Activated T-helper 1 cell treated with anti-CD3 and anti-CD28 coated beads, Interleukin-12 subunit alpha, Interleukin-12 subunit beta, Interleukin-2, Interleukin-4 antibody, amounts not matched to agents 30 ng/mL and 10 ng/mL and 1 ng/mL, durations not matched to agents 14 hours and 24 hours and 36 hours (primary cell): ENCODE measurements at regions of chr1 and their contacts with region 1.

Region 1: GRCh38 chr1:10170239-10170574 is 40.2 kb upstream of the KIF1B start:
- DNase-seq: peak; percentile 22
- H3K4me3 Mint-ChIP-seq: peak overlapping the region; percentile 71
- H3K27ac Mint-ChIP-seq: peak overlapping the region; percentile 86
- H3K4me1 Mint-ChIP-seq: peaks cover 50% of the 10 kb centered on the region
- H3K27me3 Mint-ChIP-seq: no peaks in the 10 kb centered on the region

Region 2: GRCh38 chr1:10074059-10074851 is 96.0 kb before region 1 on chr1:
- intact Hi-C with region 1: loop called (anchors 1 kb)
- DNase-seq: peak; percentile 41
- H3K4me3 Mint-ChIP-seq: peak overlapping the region; percentile 2
- H3K27ac Mint-ChIP-seq: peak overlapping the region; percentile 57
- H3K4me1 Mint-ChIP-seq: peaks cover 18% of the 10 kb centered on the region
- H3K27me3 Mint-ChIP-seq: no peaks in the 10 kb centered on the region

Region 3: DNA sequence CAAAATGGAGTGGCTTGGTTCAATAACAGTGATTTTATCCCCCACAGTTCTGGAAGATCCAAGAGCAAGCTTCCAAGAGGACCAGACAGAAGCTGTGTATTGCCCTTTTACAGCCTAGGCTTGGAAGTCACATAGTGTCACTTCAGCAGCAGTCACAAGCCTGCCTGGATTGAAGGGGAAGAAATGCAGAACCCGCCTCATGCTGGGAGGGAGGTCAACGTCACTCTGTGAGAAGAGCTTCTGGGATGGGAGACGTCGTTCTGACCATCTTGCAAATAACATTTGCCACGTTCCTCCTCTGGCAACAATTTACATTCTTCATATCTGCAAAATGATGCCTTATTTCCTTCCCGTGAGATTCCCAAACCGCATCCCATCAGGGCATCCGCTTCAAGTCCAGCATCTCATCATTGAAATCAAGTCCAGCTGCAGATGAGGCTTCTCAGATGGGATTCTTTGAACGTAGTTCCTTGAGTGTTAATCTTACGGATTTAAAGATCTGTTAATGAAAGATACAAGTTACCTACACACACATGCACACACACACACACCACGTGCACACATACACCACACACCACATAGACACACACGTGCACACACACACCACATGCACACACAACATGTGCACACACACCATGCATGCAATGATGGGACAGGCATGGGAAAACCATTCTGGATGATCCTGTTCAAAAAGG is 16.3 kb after region 1 on chr1:
- intact Hi-C with region 1: loop called (anchors 2 kb)
- DNase-seq: no peak
- H3K4me3 Mint-ChIP-seq: no peak overlapping the region
- H3K27ac Mint-ChIP-seq: no peak overlapping the region
- H3K4me1 Mint-ChIP-seq: no peaks in the 10 kb centered on the region
- H3K27me3 Mint-ChIP-seq: no peaks in the 10 kb centered on the region

Region 4: GRCh38 chr1:10283318-10283984 is 113.2 kb after region 1 on chr1:
- intact Hi-C with region 1: loop called (anchors 1 kb)
- DNase-seq: peak; percentile 5
- H3K4me3 Mint-ChIP-seq: no peak overlapping the region
- H3K27ac Mint-ChIP-seq: peak overlapping the region; percentile 55
- H3K4me1 Mint-ChIP-seq: peaks cover 22% of the 10 kb centered on the region
- H3K27me3 Mint-ChIP-seq: no peaks in the 10 kb centered on the region